Dendritic cell treated with granulocyte-macrophage colony-stimulating factor and Interleukin-4, amounts not matched to agents 40 ng/mL and 50 ng/mL, for 4 days (primary cell): ENCODE measurements at regions of chr1 and their contacts with region 1.

Region 1: DNA sequence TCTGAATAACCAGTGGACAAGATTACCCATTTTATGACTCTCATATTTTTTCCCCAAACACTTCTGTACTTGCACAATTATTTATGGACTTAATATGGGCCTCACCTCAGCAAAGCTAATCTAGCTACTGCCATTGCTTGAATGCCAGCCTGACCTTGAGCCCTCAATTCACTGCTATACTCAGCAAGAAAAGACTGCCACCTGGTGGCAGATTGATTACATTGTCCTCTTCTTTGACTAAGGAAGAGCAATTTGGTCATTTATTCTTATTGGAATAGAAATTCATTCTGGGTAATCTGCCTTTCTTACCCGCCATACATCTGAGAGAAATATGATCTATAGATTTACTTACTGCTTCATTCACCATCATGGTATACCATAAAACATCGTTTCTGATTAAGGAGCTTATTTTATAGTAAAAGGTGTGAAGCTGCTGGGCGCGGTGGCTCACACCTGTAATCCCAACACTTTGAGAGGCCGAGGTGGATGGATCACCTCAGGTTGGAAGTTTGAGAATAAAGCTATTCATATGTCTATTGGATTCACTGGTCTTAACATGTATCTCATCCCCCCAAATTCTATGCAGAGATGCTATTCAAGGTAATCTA is 32.9 kb upstream of the DIPK1A start:
- H3K4me3 Mint-ChIP-seq: no peak overlapping the region
- H3K27ac Mint-ChIP-seq: no peak overlapping the region
- H3K4me1 Mint-ChIP-seq: peaks cover 31% of the 10 kb centered on the region
- H3K27me3 Mint-ChIP-seq: no peaks in the 10 kb centered on the region

Region 2: DNA sequence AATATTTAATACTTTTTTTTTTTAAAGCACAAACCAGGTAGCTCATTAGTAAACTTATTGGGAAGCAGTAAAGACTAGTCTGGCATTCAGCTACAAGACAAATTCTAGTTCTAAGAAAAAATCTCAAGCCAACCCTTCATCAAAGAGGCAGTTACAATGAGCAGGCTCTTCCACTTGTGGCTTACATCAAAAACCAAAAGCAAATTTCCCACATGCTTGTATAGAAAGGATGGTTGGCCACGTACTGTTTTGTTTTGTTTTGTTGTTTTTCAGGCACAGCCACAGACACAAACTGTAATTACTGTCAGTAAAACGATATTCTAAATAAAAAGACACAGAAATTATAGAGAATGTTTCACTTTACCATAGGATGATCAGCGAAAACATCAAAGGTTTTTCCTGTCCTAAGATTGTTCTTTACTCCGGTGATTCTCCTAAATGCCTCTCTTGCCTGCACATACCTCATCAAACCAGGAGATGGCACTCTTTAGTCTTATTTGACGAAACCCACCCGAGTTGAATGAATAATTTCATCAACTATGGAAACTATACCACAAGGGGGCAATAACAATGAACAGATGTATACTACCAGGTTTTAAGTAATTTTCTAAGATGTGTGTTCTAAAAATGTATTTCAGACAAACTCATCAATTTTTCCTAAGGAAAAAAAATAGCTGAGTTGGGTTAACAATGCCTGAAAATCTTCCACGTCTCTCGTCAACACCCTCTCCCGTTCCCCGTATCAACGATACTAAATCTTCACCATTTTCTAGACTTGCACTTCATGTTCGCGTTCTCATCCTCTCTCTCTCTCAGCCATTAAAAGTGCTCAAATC is 135.4 kb before region 1 on chr1:
- intact Hi-C with region 1: loop called (anchors 1 kb)
- H3K4me3 Mint-ChIP-seq: no peak overlapping the region
- H3K27ac Mint-ChIP-seq: peak overlapping the region; percentile 3
- H3K4me1 Mint-ChIP-seq: peaks cover 15% of the 10 kb centered on the region
- H3K27me3 Mint-ChIP-seq: no peaks in the 10 kb centered on the region

Region 3: DNA sequence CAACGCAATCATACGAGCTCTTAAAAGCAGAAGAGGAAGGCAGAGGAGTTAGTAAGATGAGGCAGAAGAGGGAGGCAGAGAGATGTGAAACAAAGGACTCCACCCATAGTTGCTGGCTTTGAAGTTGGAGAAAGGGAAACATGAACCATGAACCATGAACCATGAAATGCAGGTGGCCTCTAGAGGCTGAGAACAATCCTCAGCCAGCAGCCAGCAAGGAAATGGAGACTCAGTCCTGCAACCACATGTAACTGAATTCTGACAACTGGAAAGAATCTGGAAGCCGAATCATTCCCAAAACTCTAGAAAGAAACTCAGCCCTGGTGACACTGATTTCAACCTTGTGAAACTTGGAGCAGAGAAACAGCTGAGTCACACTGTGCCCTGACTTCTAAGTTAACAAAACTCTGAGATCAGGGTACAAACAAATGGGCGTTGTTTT is 43.0 kb before region 1 on chr1:
- intact Hi-C with region 1: loop called (anchors 5 kb)
- H3K4me3 Mint-ChIP-seq: no peak overlapping the region
- H3K27ac Mint-ChIP-seq: no peak overlapping the region
- H3K4me1 Mint-ChIP-seq: peaks cover 37% of the 10 kb centered on the region
- H3K27me3 Mint-ChIP-seq: no peaks in the 10 kb centered on the region

Region 4: GRCh38 chr1:92960395-92961130 is 33.6 kb before region 1 on chr1:
- intact Hi-C with region 1: loop called (anchors 2 kb)
- H3K4me3 Mint-ChIP-seq: peak overlapping the region; percentile 86
- H3K27ac Mint-ChIP-seq: no peak overlapping the region
- H3K4me1 Mint-ChIP-seq: peaks cover 40% of the 10 kb centered on the region
- H3K27me3 Mint-ChIP-seq: no peaks in the 10 kb centered on the region

Region 5: GRCh38 chr1:93051961-93052360 is 57.8 kb after region 1 on chr1:
- intact Hi-C with region 1: no loop called
- H3K4me3 Mint-ChIP-seq: no peak overlapping the region
- H3K27ac Mint-ChIP-seq: no peak overlapping the region
- H3K4me1 Mint-ChIP-seq: peaks cover 5% of the 10 kb centered on the region
- H3K27me3 Mint-ChIP-seq: peaks cover 5% of the 10 kb centered on the region